Breast epithelium (tissue), 4 donors: ENCODE measurements at regions of chr10 and their contacts with region 1.

Region 1: GRCh38 chr10:71371750-71372166 is 25.0 kb upstream of the CDH23 start:
- DNase-seq: no peak
- H3K4me3 ChIP-seq: no peak overlapping the region
- H3K27ac ChIP-seq: no peak overlapping the region
- H3K4me1 ChIP-seq: no peaks in the 10 kb centered on the region
- H3K27me3 ChIP-seq: no peaks in the 10 kb centered on the region
- CTCF ChIP-seq: no peak
- POLR2A ChIP-seq: no peak

Region 2: GRCh38 chr10:71302874-71303568 is 68.7 kb before region 1 on chr10:
- intact Hi-C with region 1: no loop called
- DNase-seq: no peak
- H3K4me3 ChIP-seq: no peak overlapping the region
- H3K27ac ChIP-seq: no peak overlapping the region
- H3K4me1 ChIP-seq: no peaks in the 10 kb centered on the region
- H3K27me3 ChIP-seq: no peaks in the 10 kb centered on the region
- CTCF ChIP-seq: peak in 1 of 3 donors; percentile 12
- POLR2A ChIP-seq: no peak

Region 3: DNA sequence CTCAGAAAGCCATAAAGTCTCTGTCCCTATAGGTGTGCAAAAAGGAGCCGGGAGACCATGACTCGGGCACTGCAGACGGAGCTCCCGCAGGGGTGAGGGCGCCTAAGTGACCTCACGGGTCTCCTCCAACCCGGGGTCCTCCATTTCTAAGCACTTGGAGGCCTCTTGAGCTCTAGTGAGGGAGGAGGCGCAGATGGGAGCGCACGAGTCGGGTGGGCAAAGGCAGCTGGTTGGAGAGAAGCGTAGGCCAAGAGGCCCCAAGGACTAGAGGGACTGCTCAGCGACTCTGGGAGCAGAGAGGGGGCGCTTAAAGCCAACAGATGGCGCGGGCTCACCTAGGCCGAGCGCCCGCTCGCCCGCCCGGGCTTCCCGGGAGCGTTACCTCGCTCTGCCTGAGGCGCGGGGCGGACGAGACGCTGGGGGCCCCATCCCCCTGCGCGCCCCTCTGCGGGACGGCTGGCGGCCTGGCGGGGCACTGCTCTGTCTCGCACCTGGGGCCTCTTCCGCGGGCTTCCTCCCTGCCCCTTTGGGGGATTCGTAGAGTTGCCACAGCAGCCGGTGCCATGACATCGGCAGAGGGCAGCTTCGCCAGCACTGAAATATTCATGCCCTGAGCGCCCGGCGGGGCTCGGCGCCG is 24.4 kb after region 1 on chr10:
- intact Hi-C with region 1: no loop called
- DNase-seq: peak in 1 of 2 donors; percentile 55
- H3K4me3 ChIP-seq: peak overlapping the region; percentile 49 to 84 (median 56)
- H3K27ac ChIP-seq: peak overlapping the region; percentile 22 to 73
- H3K4me1 ChIP-seq: no peaks in the 10 kb centered on the region
- H3K27me3 ChIP-seq: peaks cover 0 to 22% of the 10 kb centered on the region in 2 donors
- CTCF ChIP-seq: peak in 2 of 3 donors; percentile 40 to 50
- POLR2A ChIP-seq: no peak

Region 4: GRCh38 chr10:71766702-71767419 is 395.1 kb after region 1 on chr10:
- intact Hi-C with region 1: no loop called
- DNase-seq: peak in 1 of 2 donors; percentile 84
- H3K4me3 ChIP-seq: peak overlapping the region in 1 of 3 donors; percentile 45
- H3K27ac ChIP-seq: peak overlapping the region; percentile 82 to 94
- H3K4me1 ChIP-seq: peaks cover 7 to 23% of the 10 kb centered on the region in 2 donors
- H3K27me3 ChIP-seq: no peaks in the 10 kb centered on the region
- CTCF ChIP-seq: no peak
- POLR2A ChIP-seq: no peak

Region 5: DNA sequence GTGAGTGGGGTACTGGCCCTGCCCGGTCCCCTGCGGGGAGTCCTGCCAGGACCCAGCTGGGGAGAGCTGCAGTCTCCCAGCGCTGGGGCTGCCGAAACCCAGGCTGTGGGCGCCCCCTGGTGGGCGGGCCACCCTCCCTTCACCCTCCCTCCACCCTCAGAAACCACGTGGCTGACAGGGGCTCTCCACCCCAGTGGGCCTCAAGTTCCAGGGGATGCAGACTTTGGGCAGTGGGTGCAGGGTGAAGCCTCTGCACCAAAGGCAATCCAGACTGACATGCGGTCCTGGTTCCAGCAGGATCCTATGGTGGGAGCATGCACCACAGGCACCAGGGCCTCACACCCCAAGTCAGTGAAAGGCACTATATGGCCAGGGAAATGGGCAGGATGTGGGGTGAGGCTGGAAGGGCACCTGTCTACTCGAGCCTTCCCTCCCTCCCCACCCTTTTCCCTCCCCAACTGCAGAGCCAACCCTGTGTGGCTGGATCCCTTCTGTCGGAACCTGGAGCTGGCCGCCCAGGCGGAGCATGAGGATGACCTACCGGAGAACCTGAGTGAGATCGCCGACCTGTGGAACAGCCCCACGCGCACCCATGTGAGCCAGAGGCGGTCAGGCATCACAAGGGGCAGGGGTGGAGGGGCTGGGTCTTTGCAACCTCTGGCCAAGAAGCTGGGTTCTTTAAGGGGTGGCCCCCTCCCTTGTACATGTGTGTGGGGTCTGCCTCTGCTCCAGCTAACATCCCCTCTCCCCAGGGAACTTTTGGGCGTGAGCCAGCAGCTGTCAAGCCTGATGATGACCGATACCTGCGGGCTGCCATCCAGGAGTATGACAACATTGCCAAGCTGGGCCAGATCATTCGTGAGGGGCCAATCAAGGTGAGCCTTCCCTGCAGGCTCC is 440.5 kb after region 1 on chr10:
- intact Hi-C with region 1: loop called (anchors 10 kb)
- DNase-seq: no peak
- H3K4me3 ChIP-seq: no peak overlapping the region
- H3K27ac ChIP-seq: no peak overlapping the region
- H3K4me1 ChIP-seq: no peaks in the 10 kb centered on the region
- H3K27me3 ChIP-seq: no peaks in the 10 kb centered on the region
- CTCF ChIP-seq: peak; percentile 66 to 76 (median 67)
- POLR2A ChIP-seq: no peak